H1 (cell line): ENCODE measurements at regions of chr1 and their contacts with region 1.

Region 1: GRCh38 chr1:209850342-209850979 is 22.7 kb downstream of the UTP25 start:
- DNase-seq: peak in 1 of 2 experiments; percentile 79
- H3K4me3 ChIP-seq: no peak overlapping the region
- H3K27ac ChIP-seq: no peak overlapping the region
- H3K4me1 ChIP-seq: no peaks in the 10 kb centered on the region
- H3K27me3 ChIP-seq: no peaks in the 10 kb centered on the region
- CTCF ChIP-seq: peak; percentile 65 to 88 (median 85)
- EP300 ChIP-seq: no peak
- POLR2A ChIP-seq: no peak
- RAD21 ChIP-seq: peak; percentile 78 to 81

Region 2: GRCh38 chr1:209527993-209528392 is 322.5 kb before region 1 on chr1:
- CTCF ChIA-PET with region 1: no interaction called
- POLR2A ChIA-PET with region 1: no interaction called
- DNase-seq: no peak
- H3K4me3 ChIP-seq: no peak overlapping the region
- H3K27ac ChIP-seq: no peak overlapping the region
- H3K4me1 ChIP-seq: no peaks in the 10 kb centered on the region
- H3K27me3 ChIP-seq: no peaks in the 10 kb centered on the region; a peak in 1 of 7 replicates
- CTCF ChIP-seq: no peak
- EP300 ChIP-seq: no peak
- POLR2A ChIP-seq: no peak
- RAD21 ChIP-seq: no peak

Region 3: GRCh38 chr1:209805321-209805781 is 45.1 kb before region 1 on chr1:
- CTCF ChIA-PET with region 1: no interaction called
- POLR2A ChIA-PET with region 1: no interaction called
- DNase-seq: peak in 1 of 2 experiments; percentile 79
- H3K4me3 ChIP-seq: peak overlapping the region; percentile 73 to 91 (median 80)
- H3K27ac ChIP-seq: peak overlapping the region; percentile 62; the same call in 1 of the 2 replicates
- H3K4me1 ChIP-seq: peaks cover 0 to 7% (median 0%) of the 10 kb centered on the region in 4 experiments; a peak in 4 of 7 replicates
- H3K27me3 ChIP-seq: no peaks in the 10 kb centered on the region
- CTCF ChIP-seq: peak; percentile 34 to 40 (median 34)
- EP300 ChIP-seq: no peak
- POLR2A ChIP-seq: no peak
- RAD21 ChIP-seq: peak in 1 of 2 experiments; percentile 34; a peak in 1 of 4 replicates

Region 4: GRCh38 chr1:209835782-209836298 is 14.6 kb before region 1 on chr1:
- CTCF ChIA-PET with region 1: interaction called, 16 read pairs
- POLR2A ChIA-PET with region 1: interaction called, 3 read pairs
- DNase-seq: no peak
- H3K4me3 ChIP-seq: no peak overlapping the region
- H3K27ac ChIP-seq: no peak overlapping the region
- H3K4me1 ChIP-seq: no peaks in the 10 kb centered on the region
- H3K27me3 ChIP-seq: no peaks in the 10 kb centered on the region
- CTCF ChIP-seq: no peak
- EP300 ChIP-seq: no peak
- POLR2A ChIP-seq: no peak
- RAD21 ChIP-seq: no peak

Region 5: GRCh38 chr1:209870151-209870831 is 19.8 kb after region 1 on chr1:
- CTCF ChIA-PET with region 1: interaction called, 10 read pairs
- POLR2A ChIA-PET with region 1: no interaction called
- DNase-seq: no peak
- H3K4me3 ChIP-seq: no peak overlapping the region
- H3K27ac ChIP-seq: no peak overlapping the region
- H3K4me1 ChIP-seq: no peaks in the 10 kb centered on the region
- H3K27me3 ChIP-seq: no peaks in the 10 kb centered on the region
- CTCF ChIP-seq: no peak
- EP300 ChIP-seq: no peak
- POLR2A ChIP-seq: no peak
- RAD21 ChIP-seq: no peak